Breast epithelium (tissue), 4 donors: ENCODE measurements at regions of chr1 and their contacts with region 1.

Region 1: GRCh38 chr1:201376464-201377374 is 761 bp downstream of the TNNT2 start:
- DNase-seq: no peak
- H3K4me3 ChIP-seq: no peak overlapping the region
- H3K27ac ChIP-seq: no peak overlapping the region
- H3K4me1 ChIP-seq: peaks cover 0 to 8% of the 10 kb centered on the region in 2 donors
- H3K27me3 ChIP-seq: no peaks in the 10 kb centered on the region
- CTCF ChIP-seq: no peak
- POLR2A ChIP-seq: no peak

Region 2: GRCh38 chr1:201394596-201394995 is 17.9 kb after region 1 on chr1:
- intact Hi-C with region 1: loop called (anchors 1 kb)
- DNase-seq: no peak
- H3K4me3 ChIP-seq: no peak overlapping the region
- H3K27ac ChIP-seq: no peak overlapping the region
- H3K4me1 ChIP-seq: peaks cover 0 to 4% of the 10 kb centered on the region in 2 donors
- H3K27me3 ChIP-seq: no peaks in the 10 kb centered on the region
- CTCF ChIP-seq: no peak
- POLR2A ChIP-seq: no peak